ENCODE measurements at regions of chr1 and their contacts with region 1.

Region 1: GRCh38 chr1:62746085-62746808 is 37.7 kb upstream of the ATG4C start:
- DNase-seq: no peak
- H3K4me3 ChIP-seq: no peak overlapping the region
- H3K27ac ChIP-seq: no peak overlapping the region
- H3K4me1 ChIP-seq: no peaks in the 10 kb centered on the region
- H3K27me3 ChIP-seq: no peaks in the 10 kb centered on the region
- CTCF ChIP-seq: peak; percentile 49

Region 2: GRCh38 chr1:62508187-62508758 is 238.0 kb before region 1 on chr1:
- intact Hi-C with region 1: loop called (anchors 5 kb)
- DNase-seq: peak; percentile 22
- H3K4me3 ChIP-seq: no peak overlapping the region
- H3K27ac ChIP-seq: no peak overlapping the region
- H3K4me1 ChIP-seq: no peaks in the 10 kb centered on the region
- H3K27me3 ChIP-seq: no peaks in the 10 kb centered on the region
- CTCF ChIP-seq: peak; percentile 54

Region 3: DNA sequence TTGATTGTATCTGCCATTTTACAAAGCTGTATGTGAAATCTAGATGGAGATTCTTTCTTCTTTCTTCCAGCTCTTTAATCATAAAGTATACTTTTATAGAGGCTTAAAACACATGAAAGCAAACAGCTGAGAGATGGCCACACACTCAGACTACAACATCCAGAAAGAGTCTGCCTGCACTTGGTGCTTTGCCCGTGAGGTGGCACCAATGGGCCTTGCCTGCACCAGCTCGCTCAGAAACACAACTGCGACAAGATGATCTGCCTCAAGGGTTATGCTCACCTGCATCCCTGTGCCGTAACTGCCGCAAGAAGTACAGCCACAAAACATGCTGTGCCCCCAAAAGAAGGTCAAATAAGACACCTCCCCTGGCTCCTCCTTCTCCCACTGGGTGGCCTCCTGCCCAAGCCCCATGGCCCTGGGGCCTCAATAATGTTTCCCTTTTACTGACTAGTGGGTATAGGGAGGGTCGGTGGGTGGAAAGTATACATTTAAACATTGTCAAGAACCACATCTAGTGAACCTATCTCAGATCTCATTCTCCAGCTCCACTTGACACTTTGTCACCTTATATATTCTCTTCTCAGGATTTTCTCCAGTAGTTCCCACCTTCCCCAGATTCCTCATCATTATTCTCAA is 215.6 kb before region 1 on chr1:
- intact Hi-C with region 1: loop called (anchors 2 kb)
- DNase-seq: peak; percentile 52
- H3K4me3 ChIP-seq: no peak overlapping the region
- H3K27ac ChIP-seq: no peak overlapping the region
- H3K4me1 ChIP-seq: no peaks in the 10 kb centered on the region
- H3K27me3 ChIP-seq: no peaks in the 10 kb centered on the region
- CTCF ChIP-seq: peak; percentile 41

Measured in colonic mucosa (tissue), 4 donors.